ENCODE measurements at regions of chr9 and their contacts with region 1.

Region 1: GRCh38 chr9:137459147-137459600 is at the start of gene NSMF:
- DNase-seq: peak; percentile 67 to 95
- H3K4me3 ChIP-seq: peak within 1 kb of the TSS; percentile 67 to 89
- H3K27ac ChIP-seq: peak within 1 kb of the TSS; percentile 92 to 95
- H3K4me1 ChIP-seq: peaks cover 40% of the 10 kb centered on the region in 2 donors
- H3K27me3 ChIP-seq: no peaks in the 10 kb centered on the region
- CTCF ChIP-seq: peak in 1 of 3 experiments; percentile 31
- total RNA-seq, gene NSMF: 231 TPM

Region 2: DNA sequence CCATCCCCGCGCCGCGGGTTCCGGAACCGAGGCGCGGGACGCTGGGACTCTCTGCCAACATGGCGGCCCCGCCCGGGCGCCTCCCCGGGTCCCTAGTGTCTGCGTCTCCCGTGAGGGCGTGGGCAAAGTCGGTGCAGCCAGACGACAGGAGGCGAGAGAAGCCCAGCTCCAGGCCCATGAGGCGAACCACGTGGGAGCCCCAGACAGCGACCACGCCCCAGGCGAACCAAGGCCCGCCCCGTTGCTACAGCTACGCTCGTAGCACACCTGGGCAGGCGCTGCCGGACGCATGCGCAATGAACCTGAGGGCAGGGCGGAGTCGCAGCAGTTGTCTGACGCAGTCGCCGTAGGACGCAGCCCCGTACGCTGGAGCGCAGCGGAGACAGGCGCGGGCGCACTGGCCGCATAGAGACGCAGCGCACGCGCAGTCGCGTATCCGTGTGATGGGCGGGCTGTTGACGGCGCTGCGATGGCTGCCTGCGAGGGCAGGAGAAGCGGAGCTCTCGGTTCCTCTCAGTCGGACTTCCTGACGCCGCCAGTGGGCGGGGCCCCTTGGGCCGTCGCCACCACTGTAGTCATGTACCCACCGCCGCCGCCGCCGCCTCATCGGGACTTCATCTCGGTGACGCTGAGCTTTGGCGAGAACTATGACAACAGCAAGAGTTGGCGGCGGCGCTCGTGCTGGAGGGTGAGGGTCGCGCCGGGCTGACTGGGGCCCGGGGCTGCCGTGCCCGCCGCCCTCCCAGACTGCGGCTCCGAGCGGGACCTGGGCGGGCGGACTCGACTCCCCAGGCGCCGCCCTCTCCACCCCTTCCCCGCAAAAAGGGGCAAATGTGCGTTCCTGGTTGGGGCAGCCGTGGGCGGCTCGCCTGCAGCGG is 372.4 kb before region 1 on chr9 and contains the start of gene MAN1B1:
- intact Hi-C with region 1: loop called (anchors 5 kb)
- DNase-seq: peak; percentile 94 to 98
- H3K4me3 ChIP-seq: peak within 1 kb of the TSS; percentile 74 to 99
- H3K27ac ChIP-seq: peak within 1 kb of the TSS; percentile 91 to 96
- H3K4me1 ChIP-seq: peaks cover 12 to 17% of the 10 kb centered on the region in 2 donors
- H3K27me3 ChIP-seq: no peaks in the 10 kb centered on the region
- CTCF ChIP-seq: no peak
- total RNA-seq, gene MAN1B1: 85.3 TPM

Region 3: DNA sequence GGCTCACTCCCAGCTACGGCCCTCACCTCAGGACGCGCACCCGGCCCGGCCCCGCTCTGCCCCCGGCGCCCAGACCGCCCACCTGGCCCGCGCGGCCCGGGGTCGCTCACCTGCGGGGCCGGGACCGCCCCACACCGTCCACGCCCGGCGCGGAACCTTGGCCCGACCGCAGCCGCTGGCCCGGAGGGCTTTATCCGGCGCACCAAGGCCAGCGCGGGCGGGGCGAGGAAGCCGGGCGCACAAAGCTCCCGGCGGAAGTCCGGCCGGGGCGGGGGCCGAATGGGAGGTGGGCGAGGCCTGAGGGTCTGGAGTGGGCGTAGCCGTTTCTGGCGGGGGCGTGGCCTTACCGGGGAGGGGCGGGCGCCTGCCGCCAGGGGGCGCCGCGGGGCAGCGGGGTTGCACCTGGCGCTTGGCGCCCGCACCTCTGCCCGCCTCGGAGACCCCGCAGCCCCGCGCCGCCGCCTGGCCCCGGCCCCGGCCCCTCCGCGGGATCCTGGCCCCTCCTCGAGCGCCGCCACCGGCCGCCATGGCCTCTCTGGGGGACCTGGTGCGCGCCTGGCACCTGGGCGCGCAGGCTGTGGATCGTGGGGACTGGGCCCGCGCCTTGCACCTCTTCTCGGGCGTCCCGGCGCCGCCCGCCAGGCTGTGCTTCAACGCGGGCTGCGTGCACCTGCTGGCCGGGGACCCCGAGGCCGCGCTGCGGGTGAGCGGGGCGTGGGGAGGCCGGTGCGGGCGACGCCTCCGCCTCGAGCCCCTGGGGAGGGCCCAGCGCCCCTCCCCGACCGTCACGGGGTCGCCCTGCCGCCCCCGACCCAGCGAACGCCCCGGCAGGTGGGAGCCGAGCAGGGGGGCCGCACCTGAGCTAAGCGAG is 35.9 kb before region 1 on chr9 and contains the starts of genes EXD3 and NOXA1:
- intact Hi-C with region 1: loop called (anchors 1 kb)
- DNase-seq: peak; percentile 62 to 95
- H3K4me3 ChIP-seq: peak within 1 kb of the TSS; percentile 73 to 100
- H3K27ac ChIP-seq: peak within 1 kb of the TSS; percentile 51 to 87
- H3K4me1 ChIP-seq: peaks cover 7 to 15% of the 10 kb centered on the region in 2 donors
- H3K27me3 ChIP-seq: no peaks in the 10 kb centered on the region
- CTCF ChIP-seq: peak; percentile 60 to 92 (median 68)
- total RNA-seq, gene EXD3: 16.7 TPM
- total RNA-seq, gene NOXA1: 6.9 TPM

Region 4: DNA sequence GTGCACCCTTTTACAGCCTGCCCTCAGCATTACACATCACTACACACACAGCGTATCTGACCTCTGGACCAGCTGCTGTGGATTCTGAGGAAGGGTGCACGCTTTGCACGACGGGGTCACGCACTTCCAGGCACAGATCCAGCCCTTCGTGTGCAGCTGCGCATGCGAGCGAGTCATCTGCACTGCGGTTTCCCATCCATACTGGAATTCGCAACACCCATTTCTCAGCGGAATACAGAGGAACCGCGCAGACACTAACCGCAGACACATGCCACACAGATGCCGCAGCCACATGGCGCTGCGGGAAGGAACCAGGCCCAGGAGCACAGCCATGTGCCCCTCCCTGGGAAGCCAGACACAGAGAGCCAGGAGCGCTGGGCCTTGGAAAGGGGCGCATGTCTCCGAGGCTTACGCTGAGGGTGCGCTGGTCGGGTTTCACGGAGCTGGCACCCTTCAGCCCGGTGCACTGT is 47.6 kb after region 1 on chr9:
- intact Hi-C with region 1: no loop called
- DNase-seq: no peak
- H3K4me3 ChIP-seq: no peak overlapping the region
- H3K27ac ChIP-seq: no peak overlapping the region
- H3K4me1 ChIP-seq: no peaks in the 10 kb centered on the region
- H3K27me3 ChIP-seq: no peaks in the 10 kb centered on the region
- CTCF ChIP-seq: no peak

Region 5: GRCh38 chr9:137551651-137552384 is 92.6 kb after region 1 on chr9 and contains the start of gene MRPL41:
- intact Hi-C with region 1: loop called (anchors 2 kb)
- DNase-seq: peak; percentile 56 to 94
- H3K4me3 ChIP-seq: peak within 1 kb of the TSS; percentile 79 to 91
- H3K27ac ChIP-seq: peak within 1 kb of the TSS; percentile 88 to 96
- H3K4me1 ChIP-seq: peaks cover 3 to 18% of the 10 kb centered on the region in 2 donors
- H3K27me3 ChIP-seq: no peaks in the 10 kb centered on the region
- CTCF ChIP-seq: no peak
- total RNA-seq, gene MRPL41: 121 TPM

Measured in ascending aorta (tissue), 2 donors.